GM12878 (cell line): ENCODE measurements at regions of chr7 and their contacts with region 1.

Region 1: GRCh38 chr7:7751243-7752092 is 33.1 kb upstream of the RPA3 start:
- DNase-seq: no peak
- ATAC-seq: peak; percentile 34; the same call in 1 of the 3 replicates
- H3K4me3 ChIP-seq: no peak overlapping the region
- H3K27ac ChIP-seq: no peak overlapping the region
- H3K4me1 ChIP-seq: no peaks in the 10 kb centered on the region
- H3K27me3 ChIP-seq: no peaks in the 10 kb centered on the region
- CTCF ChIP-seq: no peak
- EP300 ChIP-seq: no peak
- POLR2A ChIP-seq: no peak
- RAD21 ChIP-seq: no peak

Region 2: GRCh38 chr7:7686811-7687508 is 64.5 kb before region 1 on chr7:
- CTCF ChIA-PET with region 1: interaction called, 179 read pairs
- POLR2A ChIA-PET with region 1: interaction called, 4 read pairs
- RAD21 ChIA-PET with region 1: interaction called, 148 read pairs
- SMC1A ChIA-PET with region 1: interaction called, 218 read pairs
- in situ Hi-C with region 1: no loop called
- intact Hi-C with region 1: no loop called
- DNase-seq: no peak
- ATAC-seq: no peak
- H3K4me3 ChIP-seq: no peak overlapping the region
- H3K27ac ChIP-seq: no peak overlapping the region
- H3K4me1 ChIP-seq: no peaks in the 10 kb centered on the region; the same call in 1 of the 2 replicates
- H3K27me3 ChIP-seq: no peaks in the 10 kb centered on the region
- CTCF ChIP-seq: no peak
- EP300 ChIP-seq: no peak
- POLR2A ChIP-seq: no peak
- RAD21 ChIP-seq: no peak